Dorsolateral prefrontal cortex (tissue), 120 donors: ENCODE measurements at regions of chr5 and their contacts with region 1.

Region 1: DNA sequence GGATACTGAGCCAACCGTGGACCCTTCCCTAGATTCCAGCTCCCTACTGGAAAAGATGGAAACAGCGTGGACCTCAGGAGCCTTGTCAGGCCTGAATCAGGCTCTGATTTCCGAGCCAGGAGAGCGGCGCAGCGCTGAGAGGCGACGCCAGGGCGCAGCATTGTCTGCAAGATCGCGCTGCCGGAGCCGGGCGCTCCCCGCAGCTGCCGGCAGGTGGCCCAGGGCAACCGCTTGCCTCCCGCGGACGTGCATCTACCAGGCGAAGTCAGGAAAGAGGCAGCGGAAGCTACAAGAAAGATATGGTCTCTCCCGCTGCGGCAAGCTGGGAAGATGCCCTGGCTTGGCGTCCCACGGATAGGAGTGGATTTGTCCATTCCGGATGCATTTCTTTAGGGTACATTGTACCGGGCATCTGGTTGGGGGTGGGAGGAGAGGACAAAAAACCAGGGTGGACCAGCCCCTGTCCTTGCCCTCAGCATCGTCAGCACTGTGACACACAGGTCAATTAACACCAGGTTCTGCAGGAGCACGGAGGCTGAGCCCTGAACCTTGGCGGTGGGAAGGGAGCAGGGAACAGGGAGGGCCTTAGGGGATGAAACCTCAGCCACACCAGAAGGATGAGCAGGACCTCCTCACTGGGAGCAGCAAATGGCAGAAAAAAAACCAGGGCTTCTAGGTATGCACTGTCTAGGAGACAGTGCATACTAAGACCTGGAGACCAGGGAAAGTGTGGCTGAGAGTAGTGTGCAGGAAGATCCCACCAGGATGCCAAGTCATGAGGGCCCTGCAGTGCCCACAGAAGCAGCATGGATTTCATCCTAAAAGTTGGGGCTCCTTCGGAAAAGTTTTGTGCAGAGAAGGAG is 55.9 kb downstream of the SFXN1 start:
- DNase-seq: peak; percentile 68 to 88 (median 85)
- H3K4me3 ChIP-seq: peak overlapping the region in 39 of 59 donors; percentile 10 to 52 (median 37)
- H3K27ac ChIP-seq: peak overlapping the region in 17 of 59 donors; percentile 8 to 81 (median 36)
- H3K27me3 ChIP-seq: peaks cover 0 to 3% (median 0%) of the 10 kb centered on the region in 45 donors
- CTCF ChIP-seq: peak; percentile 85 to 100 (median 98)

Region 2: GRCh38 chr5:175718401-175719108 is 184.3 kb after region 1 on chr5:
- intact Hi-C with region 1: loop called in 1 of 2 experiments (anchors 2 kb)
- DNase-seq: peak in 6 of 10 donors; percentile 50 to 74 (median 59)
- H3K4me3 ChIP-seq: no peak overlapping the region
- H3K27ac ChIP-seq: no peak overlapping the region
- H3K27me3 ChIP-seq: peaks cover 0 to 5% (median 0%) of the 10 kb centered on the region in 45 donors
- CTCF ChIP-seq: peak; percentile 35 to 80 (median 64)